ENCODE measurements at regions of chr2 and their contacts with region 1.

Region 1: DNA sequence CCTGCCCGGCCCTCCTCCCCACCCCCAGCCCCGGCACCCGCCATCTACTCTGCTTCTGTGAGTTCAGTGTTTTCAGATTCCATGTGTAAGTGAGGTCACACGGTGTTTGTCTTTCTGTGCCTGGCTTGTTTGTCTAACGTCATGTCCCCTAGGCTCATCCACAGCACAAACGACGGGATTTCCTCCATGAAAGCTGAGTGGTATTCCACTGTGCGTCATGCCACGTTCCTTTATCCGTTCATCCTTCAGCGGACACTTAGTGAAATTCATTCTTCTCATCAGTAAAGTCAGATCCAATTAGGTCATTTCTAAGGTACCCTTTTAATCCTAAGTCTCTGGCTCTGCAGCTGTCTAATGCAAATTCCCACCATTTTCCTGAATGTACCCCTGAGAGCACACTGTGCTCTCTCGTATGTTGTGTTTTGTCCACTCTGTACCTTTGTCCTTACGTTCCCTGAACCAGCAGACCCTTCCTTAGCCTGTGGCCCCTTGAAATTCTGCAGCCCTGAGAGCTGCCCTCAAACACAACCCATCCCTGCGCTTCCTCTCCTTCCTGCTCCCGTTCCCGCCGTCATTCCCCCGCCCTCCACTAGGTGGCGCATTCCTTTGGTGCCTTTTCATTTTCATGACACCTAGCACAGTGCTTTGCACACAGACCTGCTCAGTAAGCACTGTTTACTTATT is 44.1 kb downstream of the TRAPPC12 start:
- H3K4me3 ChIP-seq: no peak overlapping the region
- H3K27ac ChIP-seq: no peak overlapping the region
- H3K4me1 ChIP-seq: no peaks in the 10 kb centered on the region
- CTCF ChIP-seq: peak; percentile 93

Region 2: GRCh38 chr2:3344897-3345296 is 78.7 kb before region 1 on chr2:
- CTCF ChIA-PET with region 1: no interaction called
- POLR2A ChIA-PET with region 1: no interaction called
- H3K4me3 ChIP-seq: no peak overlapping the region
- H3K27ac ChIP-seq: no peak overlapping the region
- H3K4me1 ChIP-seq: no peaks in the 10 kb centered on the region
- CTCF ChIP-seq: no peak

Region 3: GRCh38 chr2:3403587-3404334 is 19.9 kb before region 1 on chr2:
- CTCF ChIA-PET with region 1: interaction called, 15 read pairs
- POLR2A ChIA-PET with region 1: no interaction called
- H3K4me3 ChIP-seq: no peak overlapping the region
- H3K27ac ChIP-seq: no peak overlapping the region
- H3K4me1 ChIP-seq: no peaks in the 10 kb centered on the region
- CTCF ChIP-seq: no peak

Region 4: GRCh38 chr2:3443506-3444073 is 20.0 kb after region 1 on chr2:
- CTCF ChIA-PET with region 1: interaction called, 55 read pairs
- POLR2A ChIA-PET with region 1: no interaction called
- H3K4me3 ChIP-seq: no peak overlapping the region
- H3K27ac ChIP-seq: no peak overlapping the region
- H3K4me1 ChIP-seq: no peaks in the 10 kb centered on the region
- CTCF ChIP-seq: no peak

Region 5: DNA sequence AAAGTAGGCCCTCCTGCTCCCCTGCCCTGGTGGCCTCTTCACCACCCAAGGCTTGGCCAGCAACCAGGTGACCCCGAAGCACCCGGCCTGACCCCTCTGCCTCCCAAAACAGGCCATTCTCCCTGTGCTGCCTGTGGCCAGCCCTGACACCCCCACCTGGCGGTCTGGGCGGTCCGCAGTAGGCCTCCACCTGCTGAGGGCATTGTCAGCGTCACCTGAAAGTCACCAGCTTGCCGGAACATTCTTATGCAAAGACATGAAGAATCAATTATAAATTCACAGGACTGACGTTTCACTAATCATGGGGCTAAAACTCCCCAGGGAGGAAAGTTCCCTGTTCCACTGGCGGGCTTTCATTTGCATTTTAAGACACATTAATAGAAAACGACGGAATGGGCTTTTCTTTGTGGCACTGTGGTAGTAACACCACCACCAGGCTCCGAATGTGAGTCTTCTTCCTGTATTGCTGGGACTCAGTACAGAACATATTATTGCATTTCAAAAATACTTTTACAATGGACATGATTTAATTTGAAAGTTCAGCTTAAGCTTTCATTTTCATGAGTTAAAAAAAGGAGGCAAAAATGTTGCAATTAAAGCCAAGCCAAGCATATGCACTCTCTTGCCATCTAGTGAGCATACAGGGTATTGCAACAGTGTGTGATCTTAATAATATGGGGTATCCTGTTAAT is 38.3 kb after region 1 on chr2:
- CTCF ChIA-PET with region 1: interaction called, 16 read pairs
- POLR2A ChIA-PET with region 1: no interaction called
- H3K4me3 ChIP-seq: no peak overlapping the region
- H3K27ac ChIP-seq: no peak overlapping the region
- H3K4me1 ChIP-seq: no peaks in the 10 kb centered on the region
- CTCF ChIP-seq: 0 out of 2 replicates have a peak, but pooled peaks have one; percentile 24

Region 6: DNA sequence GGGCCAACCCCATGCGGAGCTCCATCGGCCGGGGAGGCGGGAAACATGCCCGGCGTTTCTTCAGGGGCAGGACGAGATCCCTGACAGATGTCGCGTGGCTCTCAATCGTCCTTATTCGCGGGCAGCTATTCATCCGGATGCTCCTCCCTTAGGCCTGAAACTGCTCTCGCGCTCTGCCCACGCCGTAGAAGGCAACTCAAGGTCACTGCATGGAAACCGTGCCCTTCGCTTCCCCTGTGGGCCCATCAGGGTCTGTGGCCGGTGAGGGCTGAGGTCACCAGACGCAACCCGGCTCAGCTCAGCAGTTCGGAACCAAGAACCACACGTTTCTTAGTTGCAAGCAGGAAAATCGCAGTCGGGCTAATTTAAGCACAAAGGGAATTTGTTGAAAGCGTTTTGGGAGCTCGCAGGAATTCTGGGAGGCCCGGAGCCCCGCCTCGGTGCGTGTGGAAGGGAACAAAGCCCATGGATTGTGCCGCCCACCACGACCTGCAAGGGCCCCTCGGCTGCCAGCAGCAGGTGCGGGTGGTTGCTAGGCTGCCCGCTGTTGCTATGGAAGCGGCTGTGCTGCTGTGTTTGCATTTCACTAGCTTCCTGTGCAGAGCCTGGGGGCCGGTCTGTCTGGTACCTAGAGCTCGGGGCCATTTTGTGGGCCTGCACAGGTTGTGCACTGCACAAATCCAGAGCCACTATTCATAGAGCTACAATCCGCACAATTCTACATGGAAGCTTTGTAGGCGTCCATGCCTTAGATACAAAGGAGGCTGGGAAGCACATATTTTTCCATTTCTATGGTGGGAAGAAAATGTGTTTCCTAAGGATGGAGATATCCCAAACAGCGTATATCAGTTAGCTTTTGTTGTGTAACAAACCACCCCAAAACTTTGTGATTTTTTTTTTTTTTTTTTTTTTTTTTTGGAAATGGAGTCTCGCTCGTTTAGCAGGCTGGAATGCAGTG is 228.3 kb after region 1 on chr2:
- CTCF ChIA-PET with region 1: interaction called, 27 read pairs
- POLR2A ChIA-PET with region 1: no interaction called
- H3K4me3 ChIP-seq: no peak overlapping the region
- H3K27ac ChIP-seq: no peak overlapping the region
- H3K4me1 ChIP-seq: no peaks in the 10 kb centered on the region
- CTCF ChIP-seq: no peak